Activated B cell treated with CpG ODN at 0.5 μM for 24 hours (primary cell): ENCODE measurements at regions of chr4 and their contacts with region 1.

Region 1: DNA sequence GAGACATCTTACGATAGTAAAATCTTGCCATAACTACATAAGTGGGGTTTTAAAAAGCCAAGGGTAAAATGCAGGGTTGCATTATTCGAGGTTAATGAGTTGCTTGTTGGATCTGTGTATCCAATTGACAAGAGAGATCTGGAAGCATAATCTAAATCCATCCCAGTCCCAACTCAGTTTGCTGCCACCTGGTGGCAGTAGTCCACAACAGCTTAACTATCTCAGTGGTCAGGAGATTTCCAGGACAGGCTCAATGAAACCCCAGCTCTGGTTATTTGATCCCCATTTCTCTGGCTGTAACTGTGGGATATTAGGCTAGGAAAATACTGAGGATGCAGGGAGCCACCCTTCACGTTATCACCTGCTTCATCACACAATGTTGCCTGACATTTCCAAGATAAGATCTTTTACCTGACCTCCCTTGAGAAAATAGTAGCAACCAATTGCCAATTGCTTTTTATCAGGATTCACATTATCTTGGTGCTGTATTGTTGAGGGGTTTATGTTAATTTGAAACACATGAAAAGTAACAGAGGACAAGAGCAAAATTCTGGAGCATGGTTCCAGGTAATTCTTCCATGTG is 88.2 kb upstream of the TNIP3 start:
- DNase-seq: no peak
- ATAC-seq: no peak
- H3K4me3 Mint-ChIP-seq: no peak overlapping the region
- H3K27ac Mint-ChIP-seq: no peak overlapping the region
- H3K4me1 Mint-ChIP-seq: no peaks in the 10 kb centered on the region
- H3K27me3 Mint-ChIP-seq: no peaks in the 10 kb centered on the region
- CTCF ChIP-seq: peak; percentile 24

Region 2: GRCh38 chr4:119314356-119314755 is 1938.0 kb before region 1 on chr4:
- CTCF ChIA-PET with region 1: no interaction called
- POLR2A ChIA-PET with region 1: no interaction called
- intact Hi-C with region 1: loop called (anchors 5 kb)
- DNase-seq: no peak
- ATAC-seq: peak; percentile 57
- H3K4me3 Mint-ChIP-seq: no peak overlapping the region
- H3K27ac Mint-ChIP-seq: no peak overlapping the region
- H3K4me1 Mint-ChIP-seq: no peaks in the 10 kb centered on the region
- H3K27me3 Mint-ChIP-seq: peaks cover 8% of the 10 kb centered on the region
- CTCF ChIP-seq: no peak

Region 3: GRCh38 chr4:120156120-120156718 is 1096.1 kb before region 1 on chr4:
- CTCF ChIA-PET with region 1: interaction called, 4 read pairs
- POLR2A ChIA-PET with region 1: no interaction called
- intact Hi-C with region 1: loop called (anchors 1 kb)
- DNase-seq: no peak
- ATAC-seq: no peak
- H3K4me3 Mint-ChIP-seq: no peak overlapping the region
- H3K27ac Mint-ChIP-seq: no peak overlapping the region
- H3K4me1 Mint-ChIP-seq: no peaks in the 10 kb centered on the region
- H3K27me3 Mint-ChIP-seq: peaks cover 2% of the 10 kb centered on the region
- CTCF ChIP-seq: peak; percentile 68

Region 4: GRCh38 chr4:120801137-120801758 is 451.1 kb before region 1 on chr4:
- CTCF ChIA-PET with region 1: no interaction called
- POLR2A ChIA-PET with region 1: no interaction called
- intact Hi-C with region 1: no loop called
- DNase-seq: no peak
- ATAC-seq: no peak
- H3K4me3 Mint-ChIP-seq: no peak overlapping the region
- H3K27ac Mint-ChIP-seq: no peak overlapping the region
- H3K4me1 Mint-ChIP-seq: no peaks in the 10 kb centered on the region
- H3K27me3 Mint-ChIP-seq: no peaks in the 10 kb centered on the region
- CTCF ChIP-seq: no peak

Region 5: GRCh38 chr4:121192480-121192879 is 59.8 kb before region 1 on chr4:
- CTCF ChIA-PET with region 1: interaction called, 35 read pairs
- POLR2A ChIA-PET with region 1: no interaction called
- intact Hi-C with region 1: loop called (anchors 1 kb)
- DNase-seq: no peak
- ATAC-seq: peak; percentile 37
- H3K4me3 Mint-ChIP-seq: no peak overlapping the region
- H3K27ac Mint-ChIP-seq: no peak overlapping the region
- H3K4me1 Mint-ChIP-seq: peaks cover 3% of the 10 kb centered on the region
- H3K27me3 Mint-ChIP-seq: no peaks in the 10 kb centered on the region
- CTCF ChIP-seq: peak; percentile 66

Region 6: DNA sequence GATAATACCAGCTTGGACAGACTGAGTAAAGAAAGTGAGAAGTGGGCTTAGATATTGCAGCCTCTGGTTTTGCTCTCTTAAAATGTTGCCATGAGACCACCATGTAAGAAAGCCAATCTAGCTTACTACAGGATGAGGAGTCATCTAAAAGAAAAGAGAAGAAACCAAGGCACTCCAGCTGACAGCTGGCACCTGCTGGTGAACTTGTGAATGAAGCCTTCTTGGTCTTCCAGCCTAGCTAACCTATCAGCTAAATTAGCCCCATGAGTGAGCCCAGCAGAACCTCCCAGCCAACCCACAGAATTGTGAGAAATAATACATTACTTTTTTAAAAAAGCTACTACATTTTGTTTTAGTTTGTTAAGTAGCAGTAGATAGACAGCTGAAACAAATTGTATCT is 283.0 kb after region 1 on chr4:
- CTCF ChIA-PET with region 1: no interaction called
- POLR2A ChIA-PET with region 1: no interaction called
- intact Hi-C with region 1: no loop called
- DNase-seq: no peak
- ATAC-seq: no peak
- H3K4me3 Mint-ChIP-seq: no peak overlapping the region
- H3K27ac Mint-ChIP-seq: no peak overlapping the region
- H3K4me1 Mint-ChIP-seq: no peaks in the 10 kb centered on the region
- H3K27me3 Mint-ChIP-seq: no peaks in the 10 kb centered on the region
- CTCF ChIP-seq: no peak